ENCODE measurements at regions of chr1 and their contacts with region 1.

Region 1: GRCh38 chr1:63537940-63538339 is 14.6 kb downstream of the EFCAB7 start:
- DNase-seq: peak; percentile 7
- H3K4me3 ChIP-seq: no peak overlapping the region
- H3K27ac ChIP-seq: no peak overlapping the region
- H3K4me1 ChIP-seq: no peaks in the 10 kb centered on the region
- H3K27me3 ChIP-seq: no peaks in the 10 kb centered on the region
- CTCF ChIP-seq: peak; percentile 70
- EP300 ChIP-seq: no peak
- RAD21 ChIP-seq: peak; percentile 59

Region 2: GRCh38 chr1:63316984-63317816 is 220.7 kb before region 1 on chr1:
- CTCF ChIA-PET with region 1: interaction called, 11 read pairs
- POLR2A ChIA-PET with region 1: no interaction called
- DNase-seq: peak; percentile 75
- H3K4me3 ChIP-seq: peak overlapping the region; percentile 28 to 44
- H3K27ac ChIP-seq: no peak overlapping the region
- H3K4me1 ChIP-seq: peaks cover 4 to 5% of the 10 kb centered on the region in 2 experiments; a peak in 2 of 4 replicates
- H3K27me3 ChIP-seq: peaks cover 85% of the 10 kb centered on the region
- CTCF ChIP-seq: peak; percentile 49
- EP300 ChIP-seq: no peak
- RAD21 ChIP-seq: peak; percentile 26; the same call in 1 of the 2 replicates

Region 3: GRCh38 chr1:63512584-63512983 is 25.4 kb before region 1 on chr1:
- CTCF ChIA-PET with region 1: no interaction called
- POLR2A ChIA-PET with region 1: no interaction called
- DNase-seq: no peak
- H3K4me3 ChIP-seq: no peak overlapping the region
- H3K27ac ChIP-seq: no peak overlapping the region
- H3K4me1 ChIP-seq: no peaks in the 10 kb centered on the region
- H3K27me3 ChIP-seq: no peaks in the 10 kb centered on the region
- CTCF ChIP-seq: no peak
- EP300 ChIP-seq: no peak
- RAD21 ChIP-seq: no peak

Region 4: DNA sequence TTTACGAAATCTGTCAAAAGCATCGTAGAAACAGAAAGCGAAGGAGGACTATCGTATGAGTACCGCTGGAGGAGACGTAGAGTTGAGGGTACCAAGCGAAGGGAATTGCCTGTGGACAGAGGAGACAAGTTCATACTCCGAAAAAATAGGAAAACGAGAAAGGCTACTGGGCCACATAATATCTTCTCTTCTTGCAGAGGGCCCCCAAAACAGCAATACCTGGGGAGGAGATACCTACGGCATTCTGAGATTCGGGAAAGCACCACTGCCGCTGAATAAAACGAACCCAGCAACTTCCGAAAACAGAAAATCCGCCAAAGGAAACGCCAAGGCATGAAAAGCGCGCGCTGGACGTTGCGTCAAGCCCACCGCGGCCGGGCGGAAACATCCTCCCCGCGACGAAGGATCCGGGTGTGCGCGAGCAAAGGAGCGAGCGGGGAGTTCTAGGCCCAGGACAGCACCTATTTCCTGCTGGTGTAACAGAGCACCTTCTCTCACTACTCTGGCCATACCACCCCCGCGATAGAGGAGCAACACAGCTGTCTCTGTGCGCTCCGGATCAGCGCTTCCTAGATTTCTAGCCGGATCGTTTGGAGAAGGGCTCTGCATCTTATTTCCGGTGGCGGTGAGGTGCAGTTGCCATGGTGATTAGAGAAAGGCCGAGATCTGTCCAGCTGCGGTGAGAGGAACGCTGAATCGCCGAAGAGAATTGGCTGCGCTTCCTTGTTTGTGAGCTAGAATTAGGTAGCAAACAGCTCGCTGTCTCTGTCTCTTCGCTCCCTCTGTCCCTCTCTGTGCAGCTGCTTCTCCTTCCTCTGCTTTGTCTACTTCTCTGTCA is 14.8 kb before region 1 on chr1 and contains the starts of genes EFCAB7 and ITGB3BP:
- CTCF ChIA-PET with region 1: interaction called, 29 read pairs
- POLR2A ChIA-PET with region 1: interaction called, 3 read pairs
- DNase-seq: peak; percentile 79
- H3K4me3 ChIP-seq: peak within 1 kb of the TSS; percentile 91 to 94
- H3K27ac ChIP-seq: peak within 1 kb of the TSS; percentile 97 to 99
- H3K4me1 ChIP-seq: peaks cover 9 to 11% of the 10 kb centered on the region in 2 experiments; a peak in 3 of 4 replicates
- H3K27me3 ChIP-seq: no peaks in the 10 kb centered on the region
- CTCF ChIP-seq: no peak
- EP300 ChIP-seq: peak; percentile 24 to 29; a peak in 1 of 4 replicates
- RAD21 ChIP-seq: no peak
- polyA plus RNA-seq, gene EFCAB7: 2.4 and 2.7 TPM in 2 replicates
- polyA plus RNA-seq, gene ITGB3BP: 9.9 and 12.8 TPM in 2 replicates

Region 5: GRCh38 chr1:63555480-63555879 is 17.5 kb after region 1 on chr1:
- CTCF ChIA-PET with region 1: interaction called, 11 read pairs
- POLR2A ChIA-PET with region 1: no interaction called
- DNase-seq: no peak
- H3K4me3 ChIP-seq: no peak overlapping the region
- H3K27ac ChIP-seq: no peak overlapping the region
- H3K4me1 ChIP-seq: no peaks in the 10 kb centered on the region
- H3K27me3 ChIP-seq: no peaks in the 10 kb centered on the region
- CTCF ChIP-seq: no peak
- EP300 ChIP-seq: no peak
- RAD21 ChIP-seq: no peak

Region 6: DNA sequence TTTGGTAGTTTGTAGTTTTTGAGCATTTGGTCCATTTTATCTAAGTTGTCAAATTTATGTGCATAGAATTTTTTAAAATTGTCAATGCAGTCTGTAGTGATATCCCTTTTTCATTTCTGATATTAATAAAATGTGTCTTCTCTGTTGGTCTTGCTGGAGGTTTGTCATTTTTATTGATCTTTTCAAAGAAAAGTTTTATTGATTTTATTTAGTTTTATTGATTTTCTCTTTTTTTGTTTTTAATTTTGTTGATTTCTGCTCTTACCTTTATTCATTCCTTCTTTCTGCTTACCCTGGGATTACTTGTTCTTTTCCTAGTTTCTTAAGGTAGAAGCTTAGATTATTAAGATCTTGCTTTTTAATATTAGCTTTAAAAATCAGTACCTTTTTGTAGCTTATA is 47.3 kb after region 1 on chr1:
- CTCF ChIA-PET with region 1: no interaction called
- POLR2A ChIA-PET with region 1: no interaction called
- DNase-seq: no peak
- H3K4me3 ChIP-seq: no peak overlapping the region
- H3K27ac ChIP-seq: no peak overlapping the region
- H3K4me1 ChIP-seq: no peaks in the 10 kb centered on the region
- H3K27me3 ChIP-seq: no peaks in the 10 kb centered on the region
- CTCF ChIP-seq: no peak
- EP300 ChIP-seq: no peak
- RAD21 ChIP-seq: no peak

Measured in SK-N-SH (cell line).